ENCODE measurements at regions of chr5 and their contacts with region 1.

Region 1: DNA sequence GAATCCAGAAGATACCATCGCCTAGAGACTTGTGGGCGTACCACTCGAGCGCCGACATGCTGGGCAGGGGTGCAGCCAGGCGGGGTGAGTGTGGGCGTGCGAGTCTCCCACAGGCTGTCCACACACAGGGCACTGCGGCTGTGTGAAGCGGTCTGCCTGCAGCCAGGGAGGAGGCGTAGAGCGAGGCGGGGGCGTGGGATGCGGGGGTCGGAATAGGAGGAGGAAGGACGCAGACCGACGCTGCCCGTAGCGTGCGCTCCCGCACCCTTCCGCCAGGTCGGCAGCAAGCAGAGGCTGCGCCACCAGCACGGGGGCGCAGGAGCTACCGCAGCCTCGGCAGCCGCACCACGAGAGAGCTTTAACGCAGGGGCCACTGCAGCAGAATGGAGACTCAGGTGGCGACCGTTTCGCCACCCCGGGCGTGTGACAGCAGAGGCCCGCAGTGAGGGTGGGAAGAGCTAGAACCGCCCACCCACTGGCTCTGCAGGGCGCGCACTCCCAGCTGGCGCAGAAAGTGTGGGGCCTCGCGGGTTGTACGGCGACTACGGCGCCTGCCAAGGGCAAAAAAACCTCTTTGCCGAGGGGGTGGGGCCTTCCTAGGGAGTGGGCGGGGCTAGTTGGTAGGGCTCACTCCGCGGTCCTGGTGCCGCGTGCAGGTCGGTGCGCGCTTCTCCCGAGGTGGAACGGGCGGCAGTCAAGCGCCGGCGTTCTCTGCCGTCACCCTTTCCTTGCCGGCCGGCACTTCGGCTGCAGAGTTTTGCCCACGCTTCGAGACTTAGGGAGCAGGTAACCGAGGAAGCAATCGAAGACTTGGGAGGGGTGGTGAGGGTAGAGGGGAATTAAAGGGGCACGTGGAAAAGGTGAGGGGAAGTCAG is at the starts of genes MBLAC2 and POLR3G:
- DNase-seq: peak; percentile 93
- CTCF ChIP-seq: peak; percentile 43

Region 2: DNA sequence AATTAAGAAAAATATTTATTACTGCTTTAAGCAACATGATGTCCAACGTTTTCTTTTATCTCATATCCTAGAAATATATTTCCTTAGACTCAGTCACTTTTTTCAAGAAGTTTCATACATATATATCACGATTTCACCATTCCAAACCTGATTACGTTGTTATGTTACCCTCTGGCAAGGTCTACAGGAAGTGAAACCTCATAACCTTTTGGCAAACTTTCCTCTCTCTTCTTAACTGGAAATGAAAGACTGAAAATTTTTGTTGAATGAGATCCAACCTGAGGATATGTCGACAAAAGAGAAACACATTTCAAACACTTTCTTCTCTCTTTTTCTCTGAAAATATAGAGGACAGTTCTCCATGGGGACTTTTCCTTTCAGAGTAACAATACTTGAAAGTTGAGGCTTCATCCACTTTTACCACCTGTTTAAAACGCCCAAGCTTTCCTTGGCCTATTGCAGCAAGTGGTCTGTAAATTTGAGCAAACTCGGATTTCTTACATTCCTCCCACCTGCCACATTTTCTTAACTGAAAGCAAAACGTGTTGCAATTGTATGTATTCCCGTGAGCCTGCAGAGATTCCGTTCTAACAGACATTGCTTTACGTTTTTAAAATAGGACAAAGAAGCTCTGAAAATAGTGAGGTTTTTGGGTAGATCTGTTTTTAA is 363.0 kb before region 1 on chr5:
- in situ Hi-C with region 1: no loop called
- DNase-seq: no peak
- CTCF ChIP-seq: no peak

Region 3: DNA sequence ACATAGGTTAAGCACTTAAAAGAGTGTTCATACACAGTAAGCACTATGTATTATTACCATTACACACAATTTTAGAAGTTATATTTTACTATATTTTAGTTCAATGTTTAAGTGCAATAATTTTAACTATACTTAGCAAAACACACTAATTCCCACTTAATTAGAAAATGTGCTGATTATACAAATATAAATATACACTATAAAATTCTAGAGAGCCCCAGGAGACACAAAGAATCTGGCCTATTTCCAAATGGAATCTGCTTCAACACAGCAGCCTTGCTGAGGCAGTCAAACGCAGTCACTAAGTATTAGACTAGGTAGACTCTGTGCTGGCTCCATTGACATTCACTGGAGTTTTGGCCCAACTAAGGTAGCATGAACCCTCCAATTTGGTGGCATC is 225.8 kb before region 1 on chr5:
- in situ Hi-C with region 1: no loop called
- DNase-seq: no peak
- CTCF ChIP-seq: no peak

Region 4: GRCh38 chr5:90783460-90784333 is 309.2 kb after region 1 on chr5:
- in situ Hi-C with region 1: loop called (anchors 25 kb)
- DNase-seq: peak; percentile 22
- CTCF ChIP-seq: peak; percentile 83